CD4-positive, alpha-beta memory T cell (primary cell): ENCODE measurements at regions of chr12 and their contacts with region 1.

Region 1: GRCh38 chr12:53701518-53702260 is 25.6 kb downstream of the CALCOCO1 start:
- DNase-seq: peak; percentile 65 to 72 (median 69)
- H3K4me3 ChIP-seq: no peak overlapping the region
- H3K4me3 Mint-ChIP-seq: no peak overlapping the region
- H3K27ac ChIP-seq: no peak overlapping the region
- H3K27ac Mint-ChIP-seq: peak overlapping the region in 1 of 7 donors; percentile 10
- H3K4me1 ChIP-seq: peaks cover 4% of the 10 kb centered on the region
- H3K4me1 Mint-ChIP-seq: peaks cover 4 to 12% (median 9%) of the 10 kb centered on the region in 4 donors
- H3K27me3 ChIP-seq: peaks cover 30% of the 10 kb centered on the region
- H3K27me3 Mint-ChIP-seq: peaks cover 54 to 75% of the 10 kb centered on the region in 2 donors

Region 2: GRCh38 chr12:53664936-53665335 is 36.8 kb before region 1 on chr12:
- CTCF ChIA-PET with region 1: no interaction called
- POLR2A ChIA-PET with region 1: no interaction called
- intact Hi-C with region 1: no loop called
- DNase-seq: no peak
- H3K4me3 ChIP-seq: no peak overlapping the region
- H3K4me3 Mint-ChIP-seq: no peak overlapping the region
- H3K27ac ChIP-seq: no peak overlapping the region
- H3K27ac Mint-ChIP-seq: peak overlapping the region in 1 of 7 donors; percentile 19
- H3K4me1 ChIP-seq: no peaks in the 10 kb centered on the region
- H3K4me1 Mint-ChIP-seq: peaks cover 0 to 14% (median 4%) of the 10 kb centered on the region in 4 donors
- H3K27me3 ChIP-seq: no peaks in the 10 kb centered on the region
- H3K27me3 Mint-ChIP-seq: no peaks in the 10 kb centered on the region

Region 3: GRCh38 chr12:53684654-53685220 is 17.0 kb before region 1 on chr12:
- CTCF ChIA-PET with region 1: interaction called, 16 read pairs
- POLR2A ChIA-PET with region 1: no interaction called
- intact Hi-C with region 1: no loop called
- DNase-seq: no peak
- H3K4me3 ChIP-seq: no peak overlapping the region
- H3K4me3 Mint-ChIP-seq: no peak overlapping the region
- H3K27ac ChIP-seq: no peak overlapping the region
- H3K27ac Mint-ChIP-seq: no peak overlapping the region
- H3K4me1 ChIP-seq: no peaks in the 10 kb centered on the region
- H3K4me1 Mint-ChIP-seq: no peaks in the 10 kb centered on the region
- H3K27me3 ChIP-seq: no peaks in the 10 kb centered on the region
- H3K27me3 Mint-ChIP-seq: peaks cover 7 to 10% of the 10 kb centered on the region in 2 donors

Region 4: GRCh38 chr12:53733051-53733806 is 31.5 kb after region 1 on chr12:
- CTCF ChIA-PET with region 1: interaction called, 25 read pairs
- POLR2A ChIA-PET with region 1: no interaction called
- intact Hi-C with region 1: no loop called
- DNase-seq: no peak
- H3K4me3 ChIP-seq: no peak overlapping the region
- H3K4me3 Mint-ChIP-seq: no peak overlapping the region
- H3K27ac ChIP-seq: no peak overlapping the region
- H3K27ac Mint-ChIP-seq: no peak overlapping the region
- H3K4me1 ChIP-seq: peaks cover under 1% of the 10 kb centered on the region
- H3K4me1 Mint-ChIP-seq: peaks cover 4 to 26% (median 10%) of the 10 kb centered on the region in 4 donors
- H3K27me3 ChIP-seq: peaks cover 10% of the 10 kb centered on the region
- H3K27me3 Mint-ChIP-seq: peaks cover 6 to 13% of the 10 kb centered on the region in 2 donors

Region 5: GRCh38 chr12:53757095-53757770 is 55.5 kb after region 1 on chr12:
- CTCF ChIA-PET with region 1: interaction called, 21 read pairs
- POLR2A ChIA-PET with region 1: no interaction called
- intact Hi-C with region 1: no loop called
- DNase-seq: peak; percentile 67 to 74 (median 71)
- H3K4me3 ChIP-seq: peak overlapping the region in 1 of 2 donors; percentile 12
- H3K4me3 Mint-ChIP-seq: peak overlapping the region; percentile 47 to 75 (median 65)
- H3K27ac ChIP-seq: no peak overlapping the region
- H3K27ac Mint-ChIP-seq: peak overlapping the region in 5 of 7 donors; percentile 39 to 83 (median 65)
- H3K4me1 ChIP-seq: peaks cover 11% of the 10 kb centered on the region
- H3K4me1 Mint-ChIP-seq: peaks cover 2 to 10% (median 8%) of the 10 kb centered on the region in 4 donors
- H3K27me3 ChIP-seq: peaks cover 21% of the 10 kb centered on the region
- H3K27me3 Mint-ChIP-seq: peaks cover 27 to 31% of the 10 kb centered on the region in 2 donors